ENCODE measurements at regions of chr1 and their contacts with region 1.

Region 1: DNA sequence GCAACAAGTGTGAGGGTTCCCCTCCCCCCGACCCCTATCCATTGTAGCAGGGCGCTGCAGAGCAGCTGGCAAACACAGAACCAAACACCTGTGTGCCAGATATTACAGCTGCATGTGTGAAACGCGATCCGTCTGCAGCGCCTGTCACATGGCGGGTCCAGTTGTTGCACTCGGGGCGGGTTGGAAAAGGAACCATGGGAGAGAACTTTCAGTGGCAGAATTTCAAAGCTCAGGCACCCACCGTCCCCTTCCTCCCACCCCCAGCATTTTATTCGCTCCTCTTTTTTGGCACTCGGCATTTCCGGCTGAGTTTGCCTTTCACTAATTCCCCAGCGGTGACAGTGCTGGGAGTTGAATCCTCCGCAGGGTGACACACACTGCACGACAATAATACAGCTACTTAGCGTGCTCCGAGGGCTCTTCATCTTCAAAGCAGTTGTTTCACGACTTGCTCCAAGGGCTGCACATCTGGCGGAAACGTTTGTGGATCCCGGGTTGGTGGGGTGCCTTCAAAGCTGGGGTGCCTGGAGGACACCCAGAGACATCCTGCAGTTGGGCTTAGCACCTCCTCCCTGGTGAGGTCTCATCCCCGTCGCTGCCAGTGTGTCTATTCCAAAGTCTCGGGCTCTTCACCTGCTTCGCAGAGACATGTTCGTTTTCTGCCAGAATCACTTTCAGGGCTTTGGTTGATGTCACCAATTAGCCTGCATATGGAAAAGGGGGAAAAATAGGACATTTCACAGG is 180.7 kb downstream of the ZBTB18 start:
- DNase-seq: peak; percentile 78
- H3K4me3 ChIP-seq: peak overlapping the region; percentile 30
- H3K27ac ChIP-seq: peak overlapping the region; percentile 60
- H3K4me1 ChIP-seq: peaks cover 25% of the 10 kb centered on the region
- H3K27me3 ChIP-seq: no peaks in the 10 kb centered on the region
- CTCF ChIP-seq: no peak

Region 2: DNA sequence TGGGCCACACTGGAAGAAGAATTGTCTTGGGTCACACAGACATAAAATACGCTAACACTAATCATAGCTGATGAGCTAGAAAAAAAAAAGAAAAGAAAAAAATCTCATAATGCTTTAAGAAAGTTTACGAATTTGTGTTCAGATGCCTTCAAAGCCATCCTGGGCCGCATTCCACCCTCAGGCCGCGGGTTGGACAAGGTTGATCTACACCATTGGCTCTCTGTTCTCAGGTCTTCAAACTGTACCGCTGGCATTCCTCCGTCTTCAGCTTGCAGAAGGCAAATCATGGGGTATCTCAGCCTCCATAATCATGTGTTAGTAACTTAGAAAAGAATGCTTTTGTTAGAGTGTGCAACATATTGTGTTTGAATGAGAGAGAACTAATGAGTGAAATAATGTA is 366.8 kb before region 1 on chr1:
- CTCF ChIA-PET with region 1: no interaction called
- POLR2A ChIA-PET with region 1: no interaction called
- intact Hi-C with region 1: no loop called
- DNase-seq: no peak
- H3K4me3 ChIP-seq: no peak overlapping the region
- H3K27ac ChIP-seq: no peak overlapping the region
- H3K4me1 ChIP-seq: no peaks in the 10 kb centered on the region
- H3K27me3 ChIP-seq: no peaks in the 10 kb centered on the region
- CTCF ChIP-seq: no peak

Region 3: DNA sequence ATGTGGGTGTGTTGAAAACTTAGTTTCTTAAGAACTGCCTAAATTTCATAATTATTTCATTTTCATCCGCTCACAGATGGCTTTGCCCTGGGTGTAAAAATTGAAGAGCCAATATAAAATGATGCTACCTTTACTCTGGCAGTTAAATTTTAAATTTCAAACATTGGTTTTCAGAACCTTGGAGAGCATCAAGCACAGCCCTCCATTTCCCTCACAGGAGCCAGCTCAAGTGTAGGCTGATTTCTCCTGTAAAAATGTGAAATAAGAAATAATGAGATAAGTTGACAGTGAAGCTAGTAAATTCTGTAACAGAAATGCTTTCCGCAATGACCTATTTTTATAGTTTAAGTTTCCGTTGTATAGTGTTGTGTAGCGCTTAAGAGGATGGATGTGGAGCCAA is 327.8 kb before region 1 on chr1:
- CTCF ChIA-PET with region 1: no interaction called
- POLR2A ChIA-PET with region 1: no interaction called
- intact Hi-C with region 1: no loop called
- DNase-seq: no peak
- H3K4me3 ChIP-seq: no peak overlapping the region
- H3K27ac ChIP-seq: no peak overlapping the region
- H3K4me1 ChIP-seq: no peaks in the 10 kb centered on the region
- H3K27me3 ChIP-seq: peaks cover 7% of the 10 kb centered on the region
- CTCF ChIP-seq: no peak

Region 4: DNA sequence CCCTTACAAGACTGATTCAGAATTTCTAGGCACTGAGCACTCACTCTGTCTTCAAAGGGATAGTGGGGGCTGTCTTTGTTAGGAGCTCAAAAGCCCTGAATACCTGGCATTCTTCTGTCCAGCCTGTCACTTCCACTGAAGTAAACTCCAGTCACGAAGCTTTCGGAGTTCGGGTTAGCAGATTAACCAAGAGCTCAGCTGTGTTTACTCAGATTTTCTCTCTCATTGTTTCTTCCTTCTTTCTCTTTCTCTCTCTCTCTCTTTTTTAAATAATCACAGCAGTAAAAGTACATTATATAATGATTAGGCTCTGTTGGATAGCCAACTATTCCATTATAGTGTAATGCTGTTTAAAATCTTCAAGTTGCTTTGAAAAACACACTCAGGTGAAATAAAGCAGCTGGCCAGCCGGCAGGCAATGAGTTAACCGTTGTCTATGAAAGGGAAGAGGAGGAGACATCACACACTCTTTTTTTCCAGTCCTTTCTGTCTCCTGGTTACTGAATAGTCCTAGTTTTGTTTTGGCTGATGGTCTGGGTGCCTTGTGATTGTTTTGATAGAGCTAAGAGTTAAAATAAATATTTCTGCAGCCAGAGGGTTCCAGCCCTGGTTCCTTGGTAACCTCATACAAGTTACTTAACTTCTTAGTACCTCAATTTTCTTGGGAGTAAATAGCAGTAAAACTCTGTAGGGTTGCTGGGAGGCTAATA is 130.2 kb after region 1 on chr1:
- CTCF ChIA-PET with region 1: no interaction called
- POLR2A ChIA-PET with region 1: interaction called, 19 read pairs
- intact Hi-C with region 1: no loop called
- DNase-seq: no peak
- H3K4me3 ChIP-seq: no peak overlapping the region
- H3K27ac ChIP-seq: no peak overlapping the region
- H3K4me1 ChIP-seq: no peaks in the 10 kb centered on the region
- H3K27me3 ChIP-seq: no peaks in the 10 kb centered on the region
- CTCF ChIP-seq: no peak